ENCODE measurements at regions of chr19 and their contacts with region 1.

Region 1: DNA sequence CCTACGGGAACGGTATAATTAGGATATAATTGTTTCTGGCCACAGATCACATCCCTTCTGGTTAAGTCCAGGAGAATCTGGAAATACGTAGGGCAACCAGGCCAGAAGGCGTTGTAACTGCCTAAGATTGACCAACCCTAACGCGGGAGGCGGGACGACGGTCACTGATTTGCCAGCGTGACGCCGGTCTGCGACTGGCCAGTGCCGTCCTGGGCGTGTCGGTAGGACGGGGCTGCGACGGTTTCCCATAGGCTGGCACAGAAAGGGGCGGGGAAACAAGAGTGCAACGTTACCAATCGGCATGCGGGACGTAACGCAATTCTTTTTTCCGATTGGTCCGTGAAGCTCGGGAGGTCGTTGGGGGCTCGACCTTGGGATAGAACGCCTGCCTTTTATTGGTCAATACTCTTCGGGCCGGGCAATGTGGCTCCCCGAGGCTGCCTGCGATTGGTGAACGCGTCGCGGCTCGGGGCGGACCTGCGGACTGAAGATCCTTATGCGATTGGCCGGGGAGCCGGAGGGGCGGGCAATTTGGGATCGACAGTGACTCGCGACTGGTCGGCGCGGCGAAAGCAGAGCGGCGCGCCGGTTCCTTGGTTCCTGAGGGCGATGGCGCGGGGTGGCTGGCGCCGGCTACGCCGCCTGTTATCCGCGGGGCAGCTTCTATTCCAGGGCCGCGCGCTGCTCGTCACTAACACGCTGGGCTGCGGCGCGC is at the start of gene MPV17L2:
- DNase-seq: peak; percentile 90 to 100 (median 99)
- ATAC-seq: peak; percentile 92
- H3K4me3 ChIP-seq: peak within 1 kb of the TSS; percentile 78
- H3K4me3 Mint-ChIP-seq: peak within 1 kb of the TSS; percentile 88 to 99 (median 92)
- H3K27ac ChIP-seq: peak within 1 kb of the TSS; percentile 76
- H3K27ac Mint-ChIP-seq: peak within 1 kb of the TSS; percentile 80 to 99 (median 93)
- H3K4me1 ChIP-seq: peaks cover 9 to 12% of the 10 kb centered on the region in 2 donors
- H3K4me1 Mint-ChIP-seq: peaks cover 11 to 29% (median 21%) of the 10 kb centered on the region in 7 donors
- H3K27me3 ChIP-seq: no peaks in the 10 kb centered on the region
- H3K27me3 Mint-ChIP-seq: peaks cover 0 to 4% (median 0%) of the 10 kb centered on the region in 5 donors
- total RNA-seq, gene MPV17L2: 4.8 to 9.4 (median 6.7) TPM

Region 2: GRCh38 chr19:18117692-18118378 is 75.0 kb before region 1 on chr19:
- CTCF ChIA-PET with region 1: interaction called, 5 read pairs
- POLR2A ChIA-PET with region 1: no interaction called
- intact Hi-C with region 1: loop called in 1 of 2 experiments (anchors 1 kb)
- DNase-seq: peak; percentile 90 to 99 (median 95)
- ATAC-seq: peak; percentile 94
- H3K4me3 ChIP-seq: peak overlapping the region; percentile 71
- H3K4me3 Mint-ChIP-seq: peak overlapping the region; percentile 82 to 96 (median 90)
- H3K27ac ChIP-seq: peak overlapping the region; percentile 80
- H3K27ac Mint-ChIP-seq: peak overlapping the region; percentile 84 to 99 (median 96)
- H3K4me1 ChIP-seq: peaks cover 22 to 24% of the 10 kb centered on the region in 2 donors
- H3K4me1 Mint-ChIP-seq: peaks cover 24 to 47% (median 37%) of the 10 kb centered on the region in 7 donors
- H3K27me3 ChIP-seq: no peaks in the 10 kb centered on the region
- H3K27me3 Mint-ChIP-seq: no peaks in the 10 kb centered on the region

Region 3: GRCh38 chr19:18173572-18174288 is 19.1 kb before region 1 on chr19 and contains the start of gene IFI30:
- CTCF ChIA-PET with region 1: interaction called, 5 read pairs
- POLR2A ChIA-PET with region 1: interaction called, 11 read pairs
- intact Hi-C with region 1: loop called (anchors 1 kb)
- DNase-seq: peak in 8 of 9 donors; percentile 41 to 76 (median 52)
- ATAC-seq: peak; percentile 79
- H3K4me3 ChIP-seq: peak within 1 kb of the TSS; percentile 78
- H3K4me3 Mint-ChIP-seq: peak within 1 kb of the TSS; percentile 84 to 94 (median 90)
- H3K27ac ChIP-seq: peak within 1 kb of the TSS; percentile 67
- H3K27ac Mint-ChIP-seq: peak within 1 kb of the TSS; percentile 62 to 89 (median 79)
- H3K4me1 ChIP-seq: peaks cover 5 to 13% of the 10 kb centered on the region in 2 donors
- H3K4me1 Mint-ChIP-seq: peaks cover 0 to 29% (median 10%) of the 10 kb centered on the region in 7 donors
- H3K27me3 ChIP-seq: no peaks in the 10 kb centered on the region
- H3K27me3 Mint-ChIP-seq: no peaks in the 10 kb centered on the region
- total RNA-seq, gene IFI30: 51.3 to 514 (median 59.5) TPM

Region 4: DNA sequence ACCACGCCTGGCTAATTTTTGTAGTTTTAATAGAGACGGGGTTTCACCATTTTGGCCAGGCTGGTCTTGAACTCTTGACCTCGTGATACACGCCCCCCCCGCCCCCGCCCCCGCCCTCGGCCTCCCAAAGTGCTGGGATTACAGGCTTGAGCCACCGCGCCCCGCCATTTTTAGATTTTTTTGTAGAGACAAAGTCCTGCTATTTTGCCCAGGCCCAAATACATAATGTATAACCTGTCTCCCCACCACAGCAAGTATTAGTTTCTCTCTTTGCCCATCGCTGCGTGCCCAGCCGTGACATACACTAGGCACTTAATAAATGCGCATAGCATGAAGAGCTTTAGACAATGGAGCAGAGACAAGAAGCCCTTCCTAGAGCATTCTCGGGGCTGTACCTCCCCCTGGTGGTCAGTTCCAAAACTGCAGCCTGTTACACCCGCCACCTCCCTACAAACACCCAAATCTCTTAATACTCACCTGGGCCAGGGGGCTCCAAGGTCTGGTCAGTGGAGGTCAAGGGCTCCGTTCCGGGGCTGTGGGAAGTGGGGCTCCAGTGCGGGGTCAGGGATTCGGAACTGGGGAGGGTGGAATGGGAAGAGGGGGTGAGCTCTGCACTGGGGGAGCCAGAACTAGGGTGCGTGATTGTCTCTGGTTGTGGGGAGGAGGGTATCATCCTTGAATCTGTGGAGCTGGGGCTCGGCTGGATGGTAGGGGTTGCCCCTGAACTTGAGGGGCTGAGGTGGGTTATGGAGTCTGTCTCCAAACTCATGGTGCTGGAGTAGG is 58.9 kb after region 1 on chr19:
- CTCF ChIA-PET with region 1: interaction called, 38 read pairs
- POLR2A ChIA-PET with region 1: interaction called, 5 read pairs
- intact Hi-C with region 1: loop called (anchors 1 kb)
- DNase-seq: peak; percentile 65 to 87 (median 77)
- ATAC-seq: peak; percentile 90
- H3K4me3 ChIP-seq: no peak overlapping the region
- H3K4me3 Mint-ChIP-seq: no peak overlapping the region
- H3K27ac ChIP-seq: no peak overlapping the region
- H3K27ac Mint-ChIP-seq: peak overlapping the region in 2 of 9 donors; percentile 2 to 62
- H3K4me1 ChIP-seq: no peaks in the 10 kb centered on the region
- H3K4me1 Mint-ChIP-seq: peaks cover 0 to 7% (median 5%) of the 10 kb centered on the region in 7 donors
- H3K27me3 ChIP-seq: no peaks in the 10 kb centered on the region
- H3K27me3 Mint-ChIP-seq: peaks cover 22 to 36% (median 34%) of the 10 kb centered on the region in 5 donors

Region 5: GRCh38 chr19:18328340-18329034 is 135.7 kb after region 1 on chr19:
- CTCF ChIA-PET with region 1: interaction called, 4 read pairs
- POLR2A ChIA-PET with region 1: interaction called, 3 read pairs
- intact Hi-C with region 1: loop called (anchors 1 kb)
- DNase-seq: peak; percentile 55 to 92 (median 90)
- ATAC-seq: peak; percentile 99
- H3K4me3 ChIP-seq: peak overlapping the region; percentile 52
- H3K4me3 Mint-ChIP-seq: peak overlapping the region; percentile 62 to 87 (median 78)
- H3K27ac ChIP-seq: peak overlapping the region; percentile 45
- H3K27ac Mint-ChIP-seq: peak overlapping the region in 8 of 9 donors; percentile 38 to 75 (median 72)
- H3K4me1 ChIP-seq: peaks cover 12% of the 10 kb centered on the region in 2 donors
- H3K4me1 Mint-ChIP-seq: peaks cover 13 to 23% (median 20%) of the 10 kb centered on the region in 7 donors
- H3K27me3 ChIP-seq: no peaks in the 10 kb centered on the region
- H3K27me3 Mint-ChIP-seq: no peaks in the 10 kb centered on the region

Measured in naive thymus-derived CD4-positive, alpha-beta T cell (primary cell).